CD14-positive monocyte (primary cell): ENCODE measurements at regions of chr7 and their contacts with region 1.

Region 1: DNA sequence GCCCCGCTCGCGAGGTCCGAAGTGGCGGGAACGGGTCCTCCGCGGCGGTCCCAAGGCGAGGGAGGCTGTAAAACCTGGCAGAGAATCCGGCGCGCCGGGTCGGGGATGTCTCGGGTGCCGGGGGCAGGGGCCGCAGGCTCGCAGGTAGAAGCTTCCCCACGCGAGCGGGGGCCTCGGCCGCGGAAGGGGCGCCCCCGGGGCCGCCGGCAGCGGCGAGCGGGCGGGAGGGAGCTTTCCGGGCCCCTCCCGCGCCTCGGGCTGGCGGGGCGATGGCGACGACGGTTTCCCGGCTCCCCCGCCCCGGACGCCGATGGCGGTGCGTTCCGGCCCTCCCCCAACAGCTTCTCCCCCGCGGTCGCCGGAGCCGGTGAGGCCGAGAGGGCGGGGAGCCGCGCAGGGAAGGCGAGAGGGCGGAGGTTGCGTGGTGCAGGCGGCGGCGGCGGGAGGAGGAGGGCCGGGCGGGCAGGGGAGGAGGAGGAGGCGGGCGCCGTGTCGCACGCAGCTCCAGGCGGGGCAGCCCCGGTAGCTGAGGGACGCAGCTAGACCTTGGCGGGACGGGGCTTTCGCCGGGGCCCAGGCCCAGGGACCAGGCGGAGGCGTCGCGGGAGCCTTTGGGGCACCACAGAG is at the start of gene CUL1:
- DNase-seq: peak; percentile 51 to 64 (median 63)
- H3K4me3 ChIP-seq: peak within 1 kb of the TSS; percentile 66 to 85 (median 77)
- H3K4me3 Mint-ChIP-seq: peak within 1 kb of the TSS; percentile 86 to 97
- H3K27ac ChIP-seq: peak within 1 kb of the TSS; percentile 76 to 86
- H3K27ac Mint-ChIP-seq: peak within 1 kb of the TSS; percentile 80 to 91 (median 89)
- H3K4me1 ChIP-seq: peaks cover 24 to 31% of the 10 kb centered on the region in 2 donors
- H3K4me1 Mint-ChIP-seq: peaks cover 44% of the 10 kb centered on the region
- H3K27me3 ChIP-seq: no peaks in the 10 kb centered on the region
- H3K27me3 Mint-ChIP-seq: peaks cover 0 to 4% (median 1%) of the 10 kb centered on the region in 3 donors
- CTCF ChIP-seq: no peak
- polyA plus RNA-seq, gene CUL1: 22.8 to 32.6 (median 23.9) TPM

Region 2: DNA sequence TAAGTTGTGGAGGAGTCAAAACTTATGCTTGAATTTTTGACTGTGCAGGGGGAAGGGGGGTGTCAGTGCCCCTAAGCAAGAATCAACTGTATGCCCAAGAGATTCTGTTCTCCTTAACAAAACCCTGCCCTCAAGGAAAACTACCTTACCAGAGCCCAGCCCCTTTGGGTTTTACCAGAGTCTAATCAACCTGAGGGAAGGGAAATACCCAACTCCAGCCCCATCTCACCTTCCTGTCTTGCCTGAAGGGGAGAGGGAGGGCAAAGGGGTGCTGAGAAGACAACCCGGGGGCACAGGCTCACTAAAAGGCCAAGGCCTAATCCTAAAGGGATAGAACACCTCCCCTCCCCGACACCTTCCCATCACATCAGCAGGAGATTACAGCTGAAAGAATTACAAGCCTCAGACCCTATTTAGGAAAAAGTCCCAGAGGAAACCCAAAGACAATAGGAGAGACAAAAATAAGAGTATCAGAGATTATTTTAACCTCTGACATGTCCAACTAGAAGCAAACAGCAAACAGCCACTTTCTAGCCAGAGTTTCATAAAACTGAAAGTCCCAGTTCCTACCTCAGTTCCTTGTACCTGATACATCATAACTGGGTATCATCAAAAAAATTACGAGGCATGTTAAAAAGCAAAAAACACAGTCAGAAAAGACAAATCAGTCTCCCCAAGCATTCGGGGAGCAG is 134.8 kb before region 1 on chr7:
- intact Hi-C with region 1: no loop called
- DNase-seq: no peak
- H3K4me3 ChIP-seq: peak overlapping the region in 1 of 3 experiments; percentile 40
- H3K4me3 Mint-ChIP-seq: peak overlapping the region; percentile 68 to 87
- H3K27ac ChIP-seq: peak overlapping the region; percentile 59 to 80
- H3K27ac Mint-ChIP-seq: peak overlapping the region; percentile 88 to 95 (median 92)
- H3K4me1 ChIP-seq: peaks cover 21 to 30% of the 10 kb centered on the region in 2 donors
- H3K4me1 Mint-ChIP-seq: peaks cover 39% of the 10 kb centered on the region
- H3K27me3 ChIP-seq: no peaks in the 10 kb centered on the region
- H3K27me3 Mint-ChIP-seq: peaks cover 0 to 3% (median 0%) of the 10 kb centered on the region in 3 donors
- CTCF ChIP-seq: no peak

Region 3: GRCh38 chr7:148623586-148624282 is 74.8 kb before region 1 on chr7:
- intact Hi-C with region 1: loop called in 1 of 2 experiments (anchors 10 kb)
- DNase-seq: peak in 2 of 3 donors; percentile 21 to 38
- H3K4me3 ChIP-seq: no peak overlapping the region
- H3K4me3 Mint-ChIP-seq: no peak overlapping the region
- H3K27ac ChIP-seq: no peak overlapping the region
- H3K27ac Mint-ChIP-seq: peak overlapping the region in 3 of 7 donors; percentile 17 to 78 (median 28)
- H3K4me1 ChIP-seq: peaks cover 48% of the 10 kb centered on the region in 2 donors
- H3K4me1 Mint-ChIP-seq: peaks cover 70% of the 10 kb centered on the region
- H3K27me3 ChIP-seq: no peaks in the 10 kb centered on the region
- H3K27me3 Mint-ChIP-seq: no peaks in the 10 kb centered on the region
- CTCF ChIP-seq: no peak